ENCODE measurements at regions of chr21 and their contacts with region 1.

Region 1: DNA sequence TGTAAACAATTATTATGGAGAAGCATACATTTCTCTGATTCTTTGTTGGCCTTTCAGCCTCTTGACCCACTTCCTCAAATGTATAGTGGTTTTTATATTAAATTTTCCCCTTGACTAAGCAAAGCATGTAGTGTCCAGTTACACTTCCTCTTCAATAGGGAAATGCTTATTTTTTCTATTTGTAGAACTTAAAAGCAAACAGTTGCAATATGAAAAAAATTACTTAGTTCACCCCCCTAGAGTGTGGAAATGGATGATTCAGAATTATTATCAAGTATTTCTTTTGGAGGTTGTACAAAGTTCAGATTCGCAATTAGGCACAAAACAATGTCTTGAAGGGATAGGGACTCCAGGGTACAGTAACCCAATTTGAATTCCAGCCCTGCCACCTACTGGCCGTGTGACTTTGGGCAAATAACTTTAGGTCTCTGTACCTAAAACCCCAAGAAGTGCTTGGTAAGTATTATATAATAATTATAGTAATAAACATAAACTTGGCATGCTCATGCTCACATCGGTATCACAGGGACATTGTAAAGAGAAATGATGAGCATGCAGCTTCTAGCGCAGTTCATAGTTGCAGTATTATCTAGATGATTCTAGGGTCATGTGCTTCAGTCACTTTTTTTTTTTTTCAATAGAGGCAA is 28.6 kb upstream of the IFNGR2 start:
- DNase-seq: peak in 3 of 4 experiments; percentile 36 to 77 (median 55)
- ATAC-seq: peak; percentile 94
- H3K4me3 ChIP-seq: no peak overlapping the region
- H3K27ac ChIP-seq: no peak overlapping the region
- H3K4me1 ChIP-seq: peaks cover 0 to under 1% of the 10 kb centered on the region in 2 experiments; a peak in 1 of 5 replicates
- H3K27me3 ChIP-seq: peaks cover 6 to 14% of the 10 kb centered on the region in 2 experiments; a peak in 2 of 5 replicates
- CTCF ChIP-seq: peak; percentile 75 to 96 (median 84)
- EP300 ChIP-seq: no peak
- POLR2A ChIP-seq: no peak
- RAD21 ChIP-seq: peak; percentile 95 to 96

Region 2: DNA sequence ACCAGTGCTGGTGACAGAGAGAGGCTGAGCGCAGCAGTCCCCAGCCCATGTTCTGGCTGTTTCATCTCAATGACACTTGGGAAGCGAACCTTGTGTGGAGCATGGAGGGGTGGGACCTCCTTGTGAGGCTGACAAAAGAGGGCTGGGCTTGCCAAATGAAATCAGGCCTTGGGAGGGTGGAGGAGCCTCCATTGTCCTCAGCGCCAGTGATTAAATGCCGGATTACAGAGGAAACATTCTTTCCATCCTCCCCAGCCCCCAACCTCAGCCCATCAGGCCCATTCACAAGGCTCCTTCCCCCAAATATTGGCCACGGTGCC is 539.7 kb before region 1 on chr21:
- CTCF ChIA-PET with region 1: no interaction called
- POLR2A ChIA-PET with region 1: no interaction called
- in situ Hi-C with region 1: no loop called
- intact Hi-C with region 1: loop called (anchors 10 kb)
- DNase-seq: no peak
- ATAC-seq: no peak
- H3K4me3 ChIP-seq: no peak overlapping the region
- H3K27ac ChIP-seq: no peak overlapping the region
- H3K4me1 ChIP-seq: peaks cover 0 to 3% of the 10 kb centered on the region in 2 experiments; a peak in 1 of 5 replicates
- H3K27me3 ChIP-seq: peaks cover 12 to 15% of the 10 kb centered on the region in 2 experiments
- CTCF ChIP-seq: no peak
- EP300 ChIP-seq: no peak
- POLR2A ChIP-seq: no peak
- RAD21 ChIP-seq: no peak

Region 3: GRCh38 chr21:33360881-33361602 is 13.5 kb before region 1 on chr21:
- CTCF ChIA-PET with region 1: interaction called, 6 read pairs
- POLR2A ChIA-PET with region 1: interaction called, 12 read pairs
- in situ Hi-C with region 1: no loop called
- intact Hi-C with region 1: no loop called
- DNase-seq: peak; percentile 87 to 90 (median 88)
- ATAC-seq: peak; percentile 97
- H3K4me3 ChIP-seq: peak overlapping the region; percentile 23
- H3K27ac ChIP-seq: no peak overlapping the region
- H3K4me1 ChIP-seq: peaks cover 9 to 20% of the 10 kb centered on the region in 2 experiments; a peak in 3 of 5 replicates
- H3K27me3 ChIP-seq: no peaks in the 10 kb centered on the region
- CTCF ChIP-seq: peak; percentile 90 to 97 (median 92)
- EP300 ChIP-seq: no peak
- POLR2A ChIP-seq: no peak
- RAD21 ChIP-seq: peak; percentile 48 to 75

Region 4: DNA sequence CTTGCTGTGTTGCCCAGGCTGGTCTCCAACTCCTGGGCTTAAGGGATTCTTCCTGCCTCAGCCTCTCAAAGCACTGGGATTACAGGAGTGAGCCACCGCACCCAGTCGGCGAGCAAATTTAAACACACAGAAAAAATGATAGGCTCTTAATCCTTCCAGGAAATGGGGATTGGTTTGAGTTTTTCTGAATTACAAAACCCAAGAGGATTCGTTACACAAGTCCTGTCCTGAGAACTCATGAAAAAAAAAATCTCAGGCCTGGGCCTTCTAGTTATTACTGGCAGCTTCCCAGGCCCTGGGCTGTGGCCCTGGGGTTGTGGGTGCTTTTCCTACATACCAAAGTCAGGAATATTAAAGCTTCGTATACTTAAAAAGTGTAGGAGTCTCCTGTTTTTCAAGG is 22.4 kb after region 1 on chr21:
- CTCF ChIA-PET with region 1: no interaction called
- POLR2A ChIA-PET with region 1: no interaction called
- in situ Hi-C with region 1: no loop called
- intact Hi-C with region 1: no loop called
- DNase-seq: no peak
- ATAC-seq: no peak
- H3K4me3 ChIP-seq: no peak overlapping the region
- H3K27ac ChIP-seq: no peak overlapping the region
- H3K4me1 ChIP-seq: 0 out of 5 replicates have a peak, but pooled peaks cover 0 to 3% of the 10 kb centered on the region in 2 experiments
- H3K27me3 ChIP-seq: no peaks in the 10 kb centered on the region
- CTCF ChIP-seq: no peak
- EP300 ChIP-seq: no peak
- POLR2A ChIP-seq: no peak
- RAD21 ChIP-seq: no peak

Measured in K562 (cell line).